Right ventricle myocardium superior (tissue), 1 donor: ENCODE measurements at regions of chr12 and their contacts with region 1.

Region 1: GRCh38 chr12:111298582-111299436 is 70.1 kb downstream of the PHETA1 start:
- DNase-seq: peak; percentile 56
- ATAC-seq: peak; percentile 64

Region 2: GRCh38 chr12:110937104-110937641 is 361.6 kb before region 1 on chr12:
- intact Hi-C with region 1: loop called (anchors 2 kb)
- DNase-seq: peak; percentile 77
- ATAC-seq: peak; percentile 73

Region 3: GRCh38 chr12:111024205-111024801 is 274.5 kb before region 1 on chr12:
- intact Hi-C with region 1: loop called (anchors 5 kb)
- DNase-seq: peak; percentile 62
- ATAC-seq: peak; percentile 82